PC-3 (cell line): ENCODE measurements at regions of chr20 and their contacts with region 1.

Region 1: DNA sequence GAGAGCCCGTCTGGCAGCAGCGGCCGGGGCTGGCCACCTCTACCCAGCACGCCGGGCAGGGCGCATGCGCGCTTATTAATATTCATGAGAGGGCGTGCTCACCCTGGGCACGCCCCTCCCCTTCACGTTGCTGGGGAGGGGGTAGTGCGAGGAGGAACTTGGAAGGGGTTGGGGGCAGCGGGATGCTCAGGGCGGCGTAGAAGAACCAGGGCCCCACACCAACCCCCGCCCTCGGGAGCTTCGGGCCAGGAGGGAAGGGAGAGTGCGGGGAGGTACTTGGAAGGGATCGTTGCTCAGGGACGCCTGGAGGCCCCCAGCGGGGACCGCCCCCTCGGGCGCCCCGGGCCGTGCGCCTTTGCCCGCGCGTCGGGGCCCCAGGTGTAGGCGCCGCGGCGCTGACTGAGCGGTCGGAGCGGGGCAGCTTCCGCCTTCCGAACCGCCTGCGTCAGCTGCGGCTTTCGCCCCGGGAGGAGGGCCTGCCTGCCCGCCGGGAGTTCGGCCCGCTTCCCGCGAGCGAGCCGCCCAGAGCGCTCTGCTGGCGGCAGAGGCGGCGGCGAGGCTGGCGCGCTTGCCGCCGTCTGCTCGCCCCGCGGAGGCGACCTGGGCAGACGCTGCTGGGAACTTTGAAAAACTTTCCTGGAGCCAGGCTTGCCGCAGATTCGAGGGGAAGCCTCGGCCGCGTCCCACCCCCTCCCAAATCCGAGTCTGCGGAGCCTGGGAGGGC is at the start of gene JAG1:
- DNase-seq: peak; percentile 99
- ATAC-seq: peak; percentile 56
- H3K4me3 ChIP-seq: peak within 1 kb of the TSS; percentile 95
- H3K27ac ChIP-seq: peak within 1 kb of the TSS; percentile 95
- H3K4me1 ChIP-seq: peaks cover 38% of the 10 kb centered on the region
- H3K27me3 ChIP-seq: no peaks in the 10 kb centered on the region
- CTCF ChIP-seq: no peak
- total RNA-seq, gene JAG1: 176 and 184 TPM in 2 replicates

Region 2: GRCh38 chr20:10469599-10469998 is 204.6 kb before region 1 on chr20:
- CTCF ChIA-PET with region 1: no interaction called
- POLR2A ChIA-PET with region 1: no interaction called
- intact Hi-C with region 1: loop called (anchors 2 kb)
- DNase-seq: peak; percentile 87
- ATAC-seq: peak; percentile 79
- H3K4me3 ChIP-seq: no peak overlapping the region
- H3K27ac ChIP-seq: peak overlapping the region; percentile 23
- H3K4me1 ChIP-seq: peaks cover 18% of the 10 kb centered on the region
- H3K27me3 ChIP-seq: no peaks in the 10 kb centered on the region
- CTCF ChIP-seq: peak; percentile 80

Region 3: DNA sequence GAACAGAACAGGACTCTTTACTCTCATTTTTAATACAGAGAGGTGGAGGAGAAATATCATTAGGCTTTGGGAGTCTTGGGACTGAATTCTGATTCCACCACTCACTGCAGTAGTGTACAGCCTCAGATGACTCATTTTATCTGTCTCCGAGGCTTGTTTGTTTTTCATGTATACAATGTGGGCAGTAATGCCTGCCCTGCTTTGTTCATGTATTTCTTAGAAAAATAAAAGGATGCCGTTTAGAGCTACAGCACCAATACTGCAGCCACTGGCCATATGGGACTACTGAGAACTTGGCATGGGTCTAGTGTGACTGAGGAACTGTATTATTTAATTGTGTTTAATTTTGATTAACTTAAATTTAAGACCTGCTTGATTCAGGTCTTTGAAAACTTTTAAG is 40.9 kb after region 1 on chr20:
- CTCF ChIA-PET with region 1: no interaction called
- POLR2A ChIA-PET with region 1: interaction called, 13 read pairs
- intact Hi-C with region 1: loop called (anchors 1 kb)
- DNase-seq: peak; percentile 85
- ATAC-seq: peak; percentile 61
- H3K4me3 ChIP-seq: no peak overlapping the region
- H3K27ac ChIP-seq: peak overlapping the region; percentile 48
- H3K4me1 ChIP-seq: peaks cover 55% of the 10 kb centered on the region
- H3K27me3 ChIP-seq: no peaks in the 10 kb centered on the region
- CTCF ChIP-seq: no peak

Region 4: DNA sequence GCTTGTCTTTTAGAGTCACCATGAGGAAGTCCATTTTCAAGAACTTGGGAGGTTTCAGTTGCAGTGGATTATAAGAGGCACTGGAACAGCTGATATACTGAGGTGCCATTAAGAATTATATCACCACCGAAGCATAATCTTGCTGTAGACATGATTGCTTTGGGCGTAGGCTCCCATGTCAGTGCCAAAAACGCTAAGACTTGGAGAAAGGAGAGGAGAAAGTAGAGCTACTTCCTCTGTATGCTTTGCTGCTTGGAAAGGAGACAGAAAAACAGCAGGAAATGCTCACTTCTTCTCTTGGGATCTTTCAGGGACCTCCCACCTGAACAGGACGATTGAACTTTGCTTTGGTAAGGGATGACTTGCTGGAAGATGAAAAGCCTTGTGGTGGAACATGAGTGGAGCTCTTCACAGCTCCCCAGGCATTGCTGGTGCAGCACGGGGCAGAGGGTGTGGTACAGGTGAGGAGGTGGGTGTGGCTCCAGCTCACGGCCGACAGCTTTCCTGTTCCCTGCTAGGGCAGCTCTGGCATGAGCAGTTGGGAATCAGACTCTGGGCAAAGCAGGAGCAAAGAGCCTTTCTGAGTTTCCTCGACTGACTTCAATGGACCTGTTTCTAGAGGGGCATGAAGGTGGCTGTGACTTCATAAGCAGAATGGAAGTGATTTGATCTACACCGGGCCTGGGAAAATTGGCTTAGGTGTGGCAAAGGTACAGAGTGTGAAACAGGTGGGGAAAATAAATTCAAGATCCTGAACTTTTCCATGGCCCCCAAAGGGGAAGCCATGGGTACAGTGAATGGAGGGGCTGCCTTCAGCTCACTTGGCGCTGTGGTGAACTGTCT is 190.1 kb after region 1 on chr20:
- CTCF ChIA-PET with region 1: no interaction called
- POLR2A ChIA-PET with region 1: interaction called, 3 read pairs
- intact Hi-C with region 1: loop called (anchors 1 kb)
- DNase-seq: peak; percentile 92
- ATAC-seq: peak; percentile 70
- H3K4me3 ChIP-seq: peak overlapping the region; percentile 54
- H3K27ac ChIP-seq: peak overlapping the region; percentile 91
- H3K4me1 ChIP-seq: peaks cover 51% of the 10 kb centered on the region
- H3K27me3 ChIP-seq: no peaks in the 10 kb centered on the region
- CTCF ChIP-seq: no peak

Region 5: DNA sequence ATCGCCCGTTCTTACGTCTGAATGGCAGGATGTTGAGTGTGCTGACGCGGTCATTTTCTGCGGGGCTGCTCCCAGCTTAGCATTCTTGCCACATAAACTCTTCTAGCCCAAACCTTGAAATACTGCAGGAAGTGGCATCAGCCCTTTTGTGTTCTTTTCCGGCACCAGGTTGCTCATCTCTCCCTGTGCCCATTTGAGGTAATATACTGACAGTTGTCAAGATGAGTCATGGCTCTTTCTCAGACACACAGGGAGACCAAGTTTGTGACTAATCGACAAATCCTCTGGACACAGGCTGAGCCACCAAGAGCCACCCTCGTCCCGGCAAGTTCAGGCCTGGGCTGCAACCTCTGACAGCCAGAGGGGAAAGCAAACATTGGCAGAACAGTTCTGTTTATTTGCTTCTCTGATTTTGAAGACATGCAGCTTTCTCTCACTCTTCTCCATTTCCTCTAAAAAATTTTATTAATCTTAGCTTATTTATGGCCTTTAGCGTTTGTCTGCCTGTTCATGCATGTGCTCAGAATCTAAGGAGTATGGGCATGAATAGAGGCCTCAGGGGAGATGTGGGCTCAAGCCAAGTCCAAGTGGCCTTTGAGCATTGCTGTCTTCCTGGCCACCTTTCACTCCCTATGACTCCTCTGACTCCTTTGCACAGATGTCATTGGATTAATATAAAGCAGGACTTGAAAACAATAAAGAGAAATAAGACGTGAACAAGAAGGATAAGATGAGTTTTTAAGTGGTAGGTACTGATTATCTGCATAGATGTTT is 327.8 kb after region 1 on chr20:
- CTCF ChIA-PET with region 1: interaction called, 3 read pairs
- POLR2A ChIA-PET with region 1: no interaction called
- intact Hi-C with region 1: loop called (anchors 5 kb)
- DNase-seq: peak; percentile 99
- ATAC-seq: peak; percentile 99
- H3K4me3 ChIP-seq: 0 out of 2 replicates have a peak overlapping the region, but pooled peaks have one; percentile 7
- H3K27ac ChIP-seq: peak overlapping the region; percentile 93
- H3K4me1 ChIP-seq: peaks cover 24% of the 10 kb centered on the region
- H3K27me3 ChIP-seq: no peaks in the 10 kb centered on the region
- CTCF ChIP-seq: no peak

Region 6: GRCh38 chr20:11267131-11267761 is 593.1 kb after region 1 on chr20:
- CTCF ChIA-PET with region 1: interaction called, 6 read pairs
- POLR2A ChIA-PET with region 1: interaction called, 5 read pairs
- intact Hi-C with region 1: loop called (anchors 1 kb)
- DNase-seq: peak; percentile 96
- ATAC-seq: peak; percentile 90
- H3K4me3 ChIP-seq: peak overlapping the region; percentile 50; the same call in 1 of the 2 replicates
- H3K27ac ChIP-seq: peak overlapping the region; percentile 93
- H3K4me1 ChIP-seq: peaks cover 27% of the 10 kb centered on the region
- H3K27me3 ChIP-seq: no peaks in the 10 kb centered on the region
- CTCF ChIP-seq: no peak